Caco-2 (cell line): ENCODE measurements at regions of chr5 and their contacts with region 1.

Region 1: DNA sequence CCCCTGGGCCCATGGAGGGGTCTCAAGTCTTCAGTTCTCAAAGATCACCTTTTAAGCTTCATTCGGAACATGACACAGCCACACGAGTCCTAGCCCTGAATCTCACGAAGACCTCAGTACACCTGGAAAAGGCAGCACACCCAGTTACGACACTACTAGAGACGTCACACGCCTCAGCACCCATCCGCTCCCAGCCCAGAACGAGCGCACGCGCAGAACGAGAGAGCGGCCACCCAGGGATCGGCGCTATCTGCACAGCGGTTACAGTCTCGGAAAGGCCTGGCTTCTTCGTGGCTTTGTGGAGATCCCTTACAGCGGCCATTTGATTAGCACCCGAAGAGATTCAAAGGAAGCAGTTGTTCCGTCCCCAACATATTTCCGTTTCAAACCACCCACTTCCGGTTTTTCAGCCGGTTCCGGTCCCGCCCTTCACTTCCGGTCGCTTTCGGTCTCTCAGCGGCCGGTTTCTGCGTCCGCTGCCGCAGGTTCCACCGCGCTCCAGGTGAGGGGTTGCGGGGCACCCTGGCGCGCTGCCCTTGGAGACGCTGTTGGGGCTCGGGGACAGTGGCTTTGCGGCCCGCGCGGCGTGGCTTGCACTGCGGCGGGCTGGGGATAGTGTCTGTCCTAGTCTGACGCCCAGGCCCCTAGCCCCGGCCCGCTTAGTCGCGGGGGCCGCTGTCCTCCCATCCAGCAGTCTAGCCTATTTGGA is at the start of gene UBLCP1:
- DNase-seq: peak; percentile 79 to 82
- H3K4me3 ChIP-seq: peak within 1 kb of the TSS; percentile 85
- H3K4me3 Mint-ChIP-seq: peak within 1 kb of the TSS; percentile 89
- H3K27ac Mint-ChIP-seq: peak within 1 kb of the TSS; percentile 95
- H3K4me1 ChIP-seq: peaks cover 12% of the 10 kb centered on the region; the same call in 1 of the 2 replicates
- H3K4me1 Mint-ChIP-seq: peaks cover 13% of the 10 kb centered on the region
- H3K27me3 ChIP-seq: peaks cover 1% of the 10 kb centered on the region
- H3K27me3 Mint-ChIP-seq: peaks cover 11% of the 10 kb centered on the region
- CTCF ChIP-seq: no peak
- total RNA-seq, gene UBLCP1: 23.0 and 23.2 TPM in 2 replicates

Region 2: DNA sequence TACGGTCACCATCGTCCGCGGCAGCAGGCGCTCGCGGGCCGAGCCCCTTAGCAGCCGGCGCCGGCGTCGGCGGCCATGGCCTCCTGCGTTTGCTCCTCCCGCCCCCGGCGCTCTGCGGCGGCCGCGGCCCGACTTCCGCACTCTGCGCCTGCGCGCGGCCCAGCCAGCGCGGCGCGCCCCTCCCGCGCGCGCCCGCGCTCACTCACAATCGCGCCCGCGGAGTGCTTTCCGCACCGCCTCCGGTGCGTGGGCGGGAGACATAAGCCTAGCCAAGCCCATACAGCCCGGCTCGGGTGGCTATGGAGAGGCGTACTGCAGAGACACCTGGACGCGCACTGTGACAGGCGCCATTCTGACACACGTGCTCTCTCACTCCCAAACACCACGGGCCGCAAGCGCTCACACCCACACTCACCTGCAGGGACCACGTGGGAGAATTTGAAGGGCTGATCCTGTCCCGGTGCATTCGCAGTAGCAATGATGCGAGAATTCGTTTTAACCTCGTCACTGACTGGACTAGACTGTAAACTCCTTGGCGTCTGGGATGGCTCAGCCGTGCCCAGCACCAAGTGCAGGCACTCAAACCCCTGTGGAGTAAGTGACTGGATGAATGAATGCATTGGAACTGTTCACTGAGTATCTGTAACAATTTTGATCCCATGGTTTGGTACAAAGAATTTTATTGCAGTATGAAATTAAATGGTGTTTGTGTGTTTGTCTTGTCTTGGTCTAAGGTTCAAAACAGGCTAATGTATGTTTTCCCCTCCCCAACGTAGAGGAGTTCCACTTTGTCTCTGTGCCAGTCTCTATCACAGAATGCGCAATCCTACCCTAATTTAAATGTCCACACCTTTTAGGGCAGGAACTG is 53.3 kb before region 1 on chr5 and contains the start of gene RNF145:
- CTCF ChIA-PET with region 1: no interaction called
- POLR2A ChIA-PET with region 1: no interaction called
- intact Hi-C with region 1: loop called (anchors 1 kb)
- DNase-seq: peak; percentile 79 to 80
- H3K4me3 ChIP-seq: peak within 1 kb of the TSS; percentile 76
- H3K4me3 Mint-ChIP-seq: peak within 1 kb of the TSS; percentile 99
- H3K27ac Mint-ChIP-seq: peak within 1 kb of the TSS; percentile 97
- H3K4me1 ChIP-seq: peaks cover 23% of the 10 kb centered on the region
- H3K4me1 Mint-ChIP-seq: peaks cover 25% of the 10 kb centered on the region
- H3K27me3 ChIP-seq: no peaks in the 10 kb centered on the region
- H3K27me3 Mint-ChIP-seq: no peaks in the 10 kb centered on the region
- CTCF ChIP-seq: no peak
- total RNA-seq, gene RNF145: 28.3 and 38.7 TPM in 2 replicates

Region 3: GRCh38 chr5:159230657-159231056 is 32.4 kb before region 1 on chr5:
- CTCF ChIA-PET with region 1: no interaction called
- POLR2A ChIA-PET with region 1: no interaction called
- intact Hi-C with region 1: no loop called
- DNase-seq: peak in 1 of 2 experiments; percentile 24
- H3K4me3 ChIP-seq: no peak overlapping the region
- H3K4me3 Mint-ChIP-seq: no peak overlapping the region
- H3K27ac Mint-ChIP-seq: no peak overlapping the region
- H3K4me1 ChIP-seq: 0 out of 2 replicates have a peak, but pooled peaks cover 4% of the 10 kb centered on the region
- H3K4me1 Mint-ChIP-seq: peaks cover 7% of the 10 kb centered on the region
- H3K27me3 ChIP-seq: no peaks in the 10 kb centered on the region; the same call in 1 of the 2 replicates
- H3K27me3 Mint-ChIP-seq: peaks cover 11% of the 10 kb centered on the region
- CTCF ChIP-seq: no peak

Region 4: GRCh38 chr5:159316519-159317383 is 53.7 kb after region 1 on chr5:
- CTCF ChIA-PET with region 1: no interaction called
- POLR2A ChIA-PET with region 1: no interaction called
- intact Hi-C with region 1: no loop called
- DNase-seq: peak; percentile 48 to 52
- H3K4me3 ChIP-seq: no peak overlapping the region
- H3K4me3 Mint-ChIP-seq: no peak overlapping the region
- H3K27ac Mint-ChIP-seq: no peak overlapping the region
- H3K4me1 ChIP-seq: no peaks in the 10 kb centered on the region
- H3K4me1 Mint-ChIP-seq: no peaks in the 10 kb centered on the region
- H3K27me3 ChIP-seq: no peaks in the 10 kb centered on the region
- H3K27me3 Mint-ChIP-seq: peaks cover 6% of the 10 kb centered on the region
- CTCF ChIP-seq: peak; percentile 70 to 80